Left ventricle myocardium superior (tissue), 1 donor: ENCODE measurements at regions of chr1 and their contacts with region 1.

Region 1: DNA sequence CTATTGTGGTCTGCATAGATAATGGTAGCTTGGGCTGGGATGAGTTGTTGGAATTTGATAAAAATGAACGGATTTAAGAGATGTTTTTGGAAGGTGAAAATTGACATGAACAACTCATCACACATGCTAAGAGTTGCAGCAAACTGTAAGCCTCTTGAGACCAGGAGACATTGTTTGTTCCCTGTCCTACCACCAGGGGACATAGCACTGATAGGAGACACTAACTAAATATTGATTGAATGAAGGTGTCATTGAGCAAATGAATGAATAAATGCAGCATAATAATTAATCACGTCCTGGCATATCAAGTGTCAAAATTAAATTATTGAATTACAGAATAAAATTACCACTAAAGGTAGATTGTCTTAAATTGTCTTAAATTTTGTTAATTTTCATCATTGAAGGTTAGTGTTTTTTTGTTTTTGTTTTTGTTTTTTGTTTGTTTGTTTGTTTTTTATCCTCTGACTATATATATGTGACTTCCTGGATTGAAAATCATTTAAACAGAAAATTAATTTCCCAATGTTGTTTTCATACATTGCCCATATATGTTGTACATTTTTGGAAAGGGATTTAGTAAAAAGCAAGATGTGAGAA is 285.3 kb upstream of the C1orf105 start:
- DNase-seq: no peak
- ATAC-seq: no peak

Region 2: GRCh38 chr1:171890131-171890530 is 245.0 kb before region 1 on chr1:
- intact Hi-C with region 1: no loop called
- DNase-seq: no peak
- ATAC-seq: no peak

Region 3: GRCh38 chr1:172401892-172402291 is 266.7 kb after region 1 on chr1:
- intact Hi-C with region 1: loop called (anchors 10 kb)
- DNase-seq: no peak
- ATAC-seq: no peak